ENCODE measurements at regions of chr1 and their contacts with region 1.

Region 1: DNA sequence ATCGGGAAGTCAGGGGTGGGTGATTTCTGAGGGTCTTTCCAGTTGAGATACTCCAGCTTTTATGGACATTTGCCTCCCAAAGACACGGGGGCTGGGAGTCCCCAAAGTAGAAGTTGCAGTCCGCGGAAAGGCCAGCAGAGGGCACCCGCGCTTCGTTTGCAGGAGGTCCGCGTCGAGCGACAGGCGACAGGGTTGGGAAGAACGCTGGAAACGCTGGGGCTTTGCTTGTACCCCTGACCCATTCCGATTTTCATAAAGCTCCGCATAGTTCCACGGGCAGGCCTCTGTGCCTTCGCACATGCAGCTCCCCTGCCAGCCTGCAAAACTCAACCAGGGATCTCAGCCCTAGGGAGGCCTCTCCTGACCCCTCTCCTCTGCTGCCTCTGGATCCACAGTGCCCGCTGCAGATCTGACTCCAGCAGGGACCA is 44.2 kb upstream of the LAPTM5 start:
- DNase-seq: peak; percentile 74
- H3K4me3 ChIP-seq: no peak overlapping the region
- H3K27ac ChIP-seq: no peak overlapping the region
- H3K4me1 ChIP-seq: no peaks in the 10 kb centered on the region
- CTCF ChIP-seq: peak; percentile 97

Region 2: GRCh38 chr1:30366911-30367310 is 434.9 kb before region 1 on chr1:
- CTCF ChIA-PET with region 1: no interaction called
- POLR2A ChIA-PET with region 1: no interaction called
- intact Hi-C with region 1: no loop called
- DNase-seq: no peak
- H3K4me3 ChIP-seq: no peak overlapping the region
- H3K27ac ChIP-seq: no peak overlapping the region
- H3K4me1 ChIP-seq: no peaks in the 10 kb centered on the region
- CTCF ChIP-seq: no peak

Region 3: GRCh38 chr1:30618335-30618747 is 183.4 kb before region 1 on chr1:
- CTCF ChIA-PET with region 1: no interaction called
- POLR2A ChIA-PET with region 1: no interaction called
- intact Hi-C with region 1: no loop called
- DNase-seq: no peak
- H3K4me3 ChIP-seq: no peak overlapping the region
- H3K27ac ChIP-seq: no peak overlapping the region
- H3K4me1 ChIP-seq: no peaks in the 10 kb centered on the region
- CTCF ChIP-seq: no peak

Region 4: DNA sequence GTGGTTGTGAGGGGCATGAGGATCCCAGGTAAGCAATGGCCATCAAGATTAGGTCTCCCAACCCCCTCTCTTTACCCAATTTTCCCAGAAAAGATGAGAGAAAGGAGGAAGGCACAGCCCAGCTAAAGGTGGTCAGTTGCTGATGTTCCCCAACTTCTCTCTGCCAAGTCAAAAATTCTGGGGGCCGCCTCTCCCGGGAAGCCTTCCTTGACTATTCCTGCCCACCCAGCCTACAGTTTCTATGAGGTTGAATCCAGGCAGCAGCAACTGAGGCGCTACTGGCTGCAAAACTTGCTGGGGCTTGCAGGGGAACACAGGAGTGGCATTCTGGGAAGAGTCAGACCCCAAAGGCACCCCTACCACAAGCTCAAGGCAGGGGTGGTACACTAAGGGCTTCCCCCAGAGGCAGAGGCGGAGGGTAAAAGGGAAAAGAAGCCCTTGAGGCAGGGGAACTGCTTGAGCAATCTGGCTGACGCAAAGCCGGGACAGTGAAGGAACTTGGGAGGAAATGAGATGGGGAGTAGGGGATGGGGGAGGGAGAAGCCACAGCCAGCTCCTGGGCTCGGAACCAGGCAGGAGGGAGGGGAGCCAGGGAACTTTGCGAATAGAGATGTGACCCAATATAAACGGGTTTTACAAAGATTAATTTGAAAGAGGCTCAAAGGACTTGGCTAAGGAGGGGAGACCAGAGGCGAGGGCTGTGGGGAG is 75.6 kb after region 1 on chr1:
- CTCF ChIA-PET with region 1: no interaction called
- POLR2A ChIA-PET with region 1: no interaction called
- intact Hi-C with region 1: no loop called
- DNase-seq: no peak
- H3K4me3 ChIP-seq: no peak overlapping the region
- H3K27ac ChIP-seq: no peak overlapping the region
- H3K4me1 ChIP-seq: peaks cover 8% of the 10 kb centered on the region
- CTCF ChIP-seq: no peak

Region 5: GRCh38 chr1:30911046-30911954 is 109.5 kb after region 1 on chr1:
- CTCF ChIA-PET with region 1: interaction called, 18 read pairs
- POLR2A ChIA-PET with region 1: no interaction called
- intact Hi-C with region 1: loop called (anchors 1 kb)
- DNase-seq: peak; percentile 74
- H3K4me3 ChIP-seq: no peak overlapping the region
- H3K27ac ChIP-seq: no peak overlapping the region
- H3K4me1 ChIP-seq: peaks cover 5% of the 10 kb centered on the region
- CTCF ChIP-seq: peak; percentile 94

Region 6: GRCh38 chr1:30929135-30929889 is 127.5 kb after region 1 on chr1:
- CTCF ChIA-PET with region 1: interaction called, 3 read pairs
- POLR2A ChIA-PET with region 1: no interaction called
- intact Hi-C with region 1: loop called (anchors 5 kb)
- DNase-seq: peak; percentile 60
- H3K4me3 ChIP-seq: no peak overlapping the region
- H3K27ac ChIP-seq: no peak overlapping the region
- H3K4me1 ChIP-seq: no peaks in the 10 kb centered on the region
- CTCF ChIP-seq: peak; percentile 87